ENCODE measurements at regions of chr17 and their contacts with region 1.

Region 1: GRCh38 chr17:32755045-32755805 is 121.7 kb downstream of the MYO1D start:
- DNase-seq: peak; percentile 66
- H3K4me3 Mint-ChIP-seq: no peak overlapping the region
- H3K27ac Mint-ChIP-seq: no peak overlapping the region
- H3K4me1 Mint-ChIP-seq: peaks cover 5% of the 10 kb centered on the region
- H3K27me3 Mint-ChIP-seq: no peaks in the 10 kb centered on the region
- CTCF ChIP-seq: peak; percentile 44

Region 2: DNA sequence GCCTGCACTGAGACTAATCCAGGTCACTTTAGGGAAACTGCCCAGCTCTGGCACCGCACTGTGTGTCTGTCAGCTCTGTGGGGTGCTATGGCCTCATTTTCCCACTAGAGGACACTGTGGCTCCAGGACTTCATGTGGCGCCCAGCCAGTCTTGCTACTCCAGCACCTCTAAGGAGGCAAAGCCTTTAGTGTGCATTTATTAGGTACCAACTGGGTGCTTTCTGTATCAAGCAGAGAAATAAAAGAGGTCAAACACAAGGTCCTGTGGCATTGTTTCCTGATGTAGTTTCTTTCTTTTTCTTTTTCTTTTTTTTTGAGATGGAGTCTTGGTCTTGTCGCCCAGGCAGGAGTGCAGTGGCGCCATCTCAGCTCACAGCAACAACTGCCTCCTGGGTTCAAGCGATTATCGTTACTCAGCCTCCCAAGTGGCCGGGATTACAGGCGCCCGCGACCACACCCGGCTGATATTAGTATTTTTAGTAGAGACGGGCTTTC is 502.1 kb before region 1 on chr17:
- CTCF ChIA-PET with region 1: no interaction called
- POLR2A ChIA-PET with region 1: no interaction called
- intact Hi-C with region 1: loop called (anchors 5 kb)
- DNase-seq: peak; percentile 82
- H3K4me3 Mint-ChIP-seq: no peak overlapping the region
- H3K27ac Mint-ChIP-seq: no peak overlapping the region
- H3K4me1 Mint-ChIP-seq: no peaks in the 10 kb centered on the region
- H3K27me3 Mint-ChIP-seq: no peaks in the 10 kb centered on the region
- CTCF ChIP-seq: peak; percentile 92

Region 3: GRCh38 chr17:32461853-32462617 is 293.2 kb before region 1 on chr17:
- CTCF ChIA-PET with region 1: interaction called, 15 read pairs
- POLR2A ChIA-PET with region 1: no interaction called
- intact Hi-C with region 1: loop called (anchors 1 kb)
- DNase-seq: peak; percentile 78
- H3K4me3 Mint-ChIP-seq: no peak overlapping the region
- H3K27ac Mint-ChIP-seq: no peak overlapping the region
- H3K4me1 Mint-ChIP-seq: peaks cover 6% of the 10 kb centered on the region
- H3K27me3 Mint-ChIP-seq: no peaks in the 10 kb centered on the region
- CTCF ChIP-seq: peak; percentile 53

Region 4: DNA sequence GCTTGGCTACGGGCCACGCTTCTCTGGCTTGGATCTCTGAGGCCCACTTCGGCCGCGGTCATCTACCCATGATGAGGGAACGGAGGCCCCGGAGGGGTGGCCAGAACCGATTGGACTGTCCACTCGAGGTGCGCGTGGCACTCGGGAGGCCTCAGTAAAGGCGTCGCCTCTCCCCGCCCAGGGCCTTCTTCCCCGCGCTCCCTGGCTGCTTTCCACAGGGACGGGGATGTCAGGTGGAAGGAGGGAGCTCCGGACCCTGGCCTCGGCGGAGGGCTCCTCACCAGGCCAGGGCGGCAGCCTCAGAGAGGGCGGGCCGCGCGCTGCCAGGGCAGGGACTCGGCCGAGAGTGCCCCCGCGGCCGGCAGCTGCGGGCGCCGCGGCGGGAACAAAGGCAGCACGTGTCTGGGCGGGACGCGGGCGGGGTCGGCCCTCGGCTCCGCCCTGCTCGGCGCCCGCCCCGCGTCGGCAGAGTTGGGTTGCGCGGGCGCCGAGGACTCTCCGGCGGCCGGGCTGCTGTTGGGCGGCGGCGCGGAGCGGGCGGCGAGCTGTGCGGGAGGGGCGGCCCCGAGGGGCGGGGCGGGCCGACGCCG is 269.0 kb before region 1 on chr17:
- CTCF ChIA-PET with region 1: interaction called, 8 read pairs
- POLR2A ChIA-PET with region 1: no interaction called
- intact Hi-C with region 1: loop called (anchors 1 kb)
- DNase-seq: peak; percentile 75
- H3K4me3 Mint-ChIP-seq: peak overlapping the region; percentile 80
- H3K27ac Mint-ChIP-seq: no peak overlapping the region
- H3K4me1 Mint-ChIP-seq: peaks cover 20% of the 10 kb centered on the region
- H3K27me3 Mint-ChIP-seq: no peaks in the 10 kb centered on the region
- CTCF ChIP-seq: no peak

Region 5: DNA sequence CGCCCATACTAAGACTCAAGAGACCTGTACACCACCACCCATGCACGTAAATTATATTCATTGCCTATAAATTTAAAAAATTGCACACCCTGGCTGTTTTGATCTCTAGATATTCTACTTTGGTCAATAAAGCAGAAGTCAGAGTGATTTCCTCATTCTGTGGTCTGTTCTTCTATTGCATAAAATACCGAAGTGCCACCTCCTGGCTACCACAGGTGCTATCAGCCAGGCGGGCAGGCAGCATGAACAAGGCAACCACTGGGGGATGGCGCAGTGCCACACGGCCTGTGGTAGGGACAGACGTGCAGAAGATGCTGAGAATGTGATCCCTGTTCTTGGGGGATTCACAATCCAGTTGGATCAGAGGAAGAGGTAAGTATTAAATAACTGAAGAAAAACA is 146.1 kb before region 1 on chr17:
- CTCF ChIA-PET with region 1: interaction called, 3 read pairs
- POLR2A ChIA-PET with region 1: no interaction called
- intact Hi-C with region 1: loop called (anchors 5 kb)
- DNase-seq: peak; percentile 68
- H3K4me3 Mint-ChIP-seq: no peak overlapping the region
- H3K27ac Mint-ChIP-seq: no peak overlapping the region
- H3K4me1 Mint-ChIP-seq: peaks cover 9% of the 10 kb centered on the region
- H3K27me3 Mint-ChIP-seq: no peaks in the 10 kb centered on the region
- CTCF ChIP-seq: peak; percentile 45

Region 6: DNA sequence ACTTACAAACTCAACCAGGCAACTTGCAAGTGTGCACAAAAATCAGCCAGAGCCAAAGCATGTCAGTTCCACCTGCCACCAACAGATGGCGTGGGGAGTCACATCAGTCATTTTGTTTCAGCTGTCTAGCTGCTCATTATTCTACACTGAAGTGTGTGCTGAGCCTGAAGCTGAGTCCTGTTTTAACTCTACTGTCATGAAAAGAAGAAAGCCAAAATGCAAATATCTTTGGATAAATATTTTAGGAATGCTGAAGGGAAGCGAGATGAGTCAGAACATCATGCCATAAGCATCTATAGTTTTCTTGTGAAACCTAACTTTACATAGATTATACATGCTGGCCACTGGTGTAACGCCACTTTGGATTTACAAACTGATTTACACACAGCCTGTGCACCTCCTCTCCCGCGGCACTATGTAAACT is 95.8 kb before region 1 on chr17:
- CTCF ChIA-PET with region 1: interaction called, 18 read pairs
- POLR2A ChIA-PET with region 1: interaction called, 3 read pairs
- intact Hi-C with region 1: loop called (anchors 1 kb)
- DNase-seq: peak; percentile 69
- H3K4me3 Mint-ChIP-seq: no peak overlapping the region
- H3K27ac Mint-ChIP-seq: no peak overlapping the region
- H3K4me1 Mint-ChIP-seq: no peaks in the 10 kb centered on the region
- H3K27me3 Mint-ChIP-seq: no peaks in the 10 kb centered on the region
- CTCF ChIP-seq: peak; percentile 93

Region 7: GRCh38 chr17:32684087-32684958 is 70.9 kb before region 1 on chr17:
- CTCF ChIA-PET with region 1: no interaction called
- POLR2A ChIA-PET with region 1: no interaction called
- intact Hi-C with region 1: no loop called
- DNase-seq: no peak
- H3K4me3 Mint-ChIP-seq: no peak overlapping the region
- H3K27ac Mint-ChIP-seq: no peak overlapping the region
- H3K4me1 Mint-ChIP-seq: no peaks in the 10 kb centered on the region
- H3K27me3 Mint-ChIP-seq: no peaks in the 10 kb centered on the region
- CTCF ChIP-seq: no peak

Region 8: GRCh38 chr17:32769839-32770238 is 14.6 kb after region 1 on chr17:
- CTCF ChIA-PET with region 1: interaction called, 10 read pairs
- POLR2A ChIA-PET with region 1: no interaction called
- intact Hi-C with region 1: no loop called
- DNase-seq: peak; percentile 71
- H3K4me3 Mint-ChIP-seq: no peak overlapping the region
- H3K27ac Mint-ChIP-seq: no peak overlapping the region
- H3K4me1 Mint-ChIP-seq: no peaks in the 10 kb centered on the region
- H3K27me3 Mint-ChIP-seq: no peaks in the 10 kb centered on the region
- CTCF ChIP-seq: peak; percentile 49